MCF 10A (cell line): ENCODE measurements at regions of chr5 and their contacts with region 1.

Region 1: DNA sequence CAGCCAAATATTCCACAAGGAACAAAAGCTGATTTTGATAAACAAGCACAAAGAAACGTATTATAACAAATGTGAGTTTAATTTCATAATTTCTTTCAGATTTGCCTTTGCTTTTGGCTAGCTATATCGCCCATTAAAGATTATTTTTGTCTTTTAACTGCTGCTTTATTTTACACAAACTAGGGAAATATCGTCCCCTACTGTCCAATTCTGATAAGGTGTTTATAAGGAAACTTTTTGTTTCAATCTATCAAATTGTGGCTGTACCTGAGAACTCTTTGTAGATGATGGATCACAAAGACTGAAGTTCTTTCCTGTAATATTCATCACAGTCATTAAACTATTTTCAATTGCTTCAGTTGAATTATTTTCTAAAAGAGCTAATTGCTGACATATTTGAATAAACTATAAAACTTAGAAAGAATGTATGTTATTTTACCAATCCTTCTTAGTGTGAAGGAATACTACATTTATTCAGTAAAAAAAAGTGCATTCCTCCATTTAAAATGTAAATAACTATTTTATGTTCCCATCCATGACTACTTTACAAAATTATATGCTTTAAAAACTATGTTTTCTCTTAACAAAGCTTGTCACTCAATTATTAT is 431.3 kb upstream of the ITGA1 start:
- DNase-seq: peak; percentile 31
- H3K4me3 Mint-ChIP-seq: no peak overlapping the region
- H3K27ac Mint-ChIP-seq: no peak overlapping the region
- H3K4me1 Mint-ChIP-seq: no peaks in the 10 kb centered on the region
- H3K27me3 Mint-ChIP-seq: peaks cover 49% of the 10 kb centered on the region
- CTCF ChIP-seq: peak; percentile 72

Region 2: GRCh38 chr5:52024363-52024762 is 332.1 kb before region 1 on chr5:
- CTCF ChIA-PET with region 1: no interaction called
- POLR2A ChIA-PET with region 1: no interaction called
- intact Hi-C with region 1: loop called (anchors 10 kb)
- DNase-seq: no peak
- H3K4me3 Mint-ChIP-seq: no peak overlapping the region
- H3K27ac Mint-ChIP-seq: no peak overlapping the region
- H3K4me1 Mint-ChIP-seq: no peaks in the 10 kb centered on the region
- H3K27me3 Mint-ChIP-seq: peaks cover 34% of the 10 kb centered on the region
- CTCF ChIP-seq: no peak

Region 3: GRCh38 chr5:52300703-52301372 is 55.6 kb before region 1 on chr5:
- CTCF ChIA-PET with region 1: no interaction called
- POLR2A ChIA-PET with region 1: no interaction called
- intact Hi-C with region 1: no loop called
- DNase-seq: no peak
- H3K4me3 Mint-ChIP-seq: no peak overlapping the region
- H3K27ac Mint-ChIP-seq: no peak overlapping the region
- H3K4me1 Mint-ChIP-seq: no peaks in the 10 kb centered on the region
- H3K27me3 Mint-ChIP-seq: peaks cover 11% of the 10 kb centered on the region
- CTCF ChIP-seq: no peak

Region 4: GRCh38 chr5:52560366-52560765 is 204.0 kb after region 1 on chr5:
- CTCF ChIA-PET with region 1: no interaction called
- POLR2A ChIA-PET with region 1: no interaction called
- intact Hi-C with region 1: loop called (anchors 10 kb)
- DNase-seq: peak; percentile 12
- H3K4me3 Mint-ChIP-seq: no peak overlapping the region
- H3K27ac Mint-ChIP-seq: no peak overlapping the region
- H3K4me1 Mint-ChIP-seq: no peaks in the 10 kb centered on the region
- H3K27me3 Mint-ChIP-seq: peaks cover 65% of the 10 kb centered on the region
- CTCF ChIP-seq: peak; percentile 28